ENCODE measurements at regions of chr10 and their contacts with region 1.

Region 1: DNA sequence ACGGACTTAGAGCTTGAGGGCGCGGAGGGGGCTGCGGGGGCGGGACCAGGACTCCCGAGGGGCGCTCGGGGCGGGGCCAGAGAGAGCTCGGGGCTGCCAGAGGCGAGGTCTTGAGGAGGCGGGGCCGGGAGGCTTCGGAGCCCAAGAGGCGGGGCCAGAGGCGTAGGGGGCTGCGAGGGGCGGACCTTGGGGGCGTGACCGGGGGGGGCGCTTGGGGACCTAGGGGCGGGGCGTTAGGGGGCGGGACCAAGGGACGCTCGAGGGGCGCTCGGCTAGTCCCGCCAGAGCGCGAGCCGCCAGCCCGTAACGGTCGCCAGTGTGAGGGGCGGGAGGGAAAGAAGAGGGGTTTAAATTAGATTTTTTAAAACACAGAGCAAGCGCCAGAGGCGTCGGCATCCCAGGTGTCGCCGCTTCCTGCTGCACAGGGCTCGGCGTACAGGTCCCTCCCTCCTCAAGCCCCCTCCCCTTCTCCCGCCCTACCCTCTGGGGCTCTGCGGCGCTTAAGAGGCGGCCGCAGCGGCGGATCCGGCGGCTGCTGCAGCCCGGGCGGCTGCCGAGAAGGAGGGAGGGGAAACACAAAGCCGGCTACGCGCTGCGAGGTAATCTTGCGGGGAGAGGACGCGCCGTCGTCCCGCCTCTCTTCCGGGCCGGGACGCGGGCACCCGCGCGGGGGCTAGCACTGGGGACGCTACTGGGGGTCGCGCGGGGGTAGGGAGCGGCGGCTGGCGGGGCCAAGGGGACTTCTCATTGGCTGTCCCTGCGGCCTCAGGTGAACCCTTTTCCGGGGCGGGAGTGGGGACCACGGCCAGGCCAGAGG is at the start of gene ADD3:
- DNase-seq: peak; percentile 61 to 64 (median 62)
- H3K4me3 ChIP-seq: peak within 1 kb of the TSS; percentile 83 to 93 (median 90)
- H3K4me3 Mint-ChIP-seq: peak within 1 kb of the TSS in 1 of 2 donors; percentile 97
- H3K27ac ChIP-seq: peak within 1 kb of the TSS; percentile 58 to 86
- H3K27ac Mint-ChIP-seq: peak within 1 kb of the TSS; percentile 75 to 91 (median 88)
- H3K4me1 ChIP-seq: peaks cover 33 to 39% of the 10 kb centered on the region in 2 donors
- H3K4me1 Mint-ChIP-seq: peaks cover 52% of the 10 kb centered on the region
- H3K27me3 ChIP-seq: no peaks in the 10 kb centered on the region
- H3K27me3 Mint-ChIP-seq: no peaks in the 10 kb centered on the region
- CTCF ChIP-seq: no peak
- polyA plus RNA-seq, gene ADD3: 94.8 to 126 (median 111) TPM

Region 2: DNA sequence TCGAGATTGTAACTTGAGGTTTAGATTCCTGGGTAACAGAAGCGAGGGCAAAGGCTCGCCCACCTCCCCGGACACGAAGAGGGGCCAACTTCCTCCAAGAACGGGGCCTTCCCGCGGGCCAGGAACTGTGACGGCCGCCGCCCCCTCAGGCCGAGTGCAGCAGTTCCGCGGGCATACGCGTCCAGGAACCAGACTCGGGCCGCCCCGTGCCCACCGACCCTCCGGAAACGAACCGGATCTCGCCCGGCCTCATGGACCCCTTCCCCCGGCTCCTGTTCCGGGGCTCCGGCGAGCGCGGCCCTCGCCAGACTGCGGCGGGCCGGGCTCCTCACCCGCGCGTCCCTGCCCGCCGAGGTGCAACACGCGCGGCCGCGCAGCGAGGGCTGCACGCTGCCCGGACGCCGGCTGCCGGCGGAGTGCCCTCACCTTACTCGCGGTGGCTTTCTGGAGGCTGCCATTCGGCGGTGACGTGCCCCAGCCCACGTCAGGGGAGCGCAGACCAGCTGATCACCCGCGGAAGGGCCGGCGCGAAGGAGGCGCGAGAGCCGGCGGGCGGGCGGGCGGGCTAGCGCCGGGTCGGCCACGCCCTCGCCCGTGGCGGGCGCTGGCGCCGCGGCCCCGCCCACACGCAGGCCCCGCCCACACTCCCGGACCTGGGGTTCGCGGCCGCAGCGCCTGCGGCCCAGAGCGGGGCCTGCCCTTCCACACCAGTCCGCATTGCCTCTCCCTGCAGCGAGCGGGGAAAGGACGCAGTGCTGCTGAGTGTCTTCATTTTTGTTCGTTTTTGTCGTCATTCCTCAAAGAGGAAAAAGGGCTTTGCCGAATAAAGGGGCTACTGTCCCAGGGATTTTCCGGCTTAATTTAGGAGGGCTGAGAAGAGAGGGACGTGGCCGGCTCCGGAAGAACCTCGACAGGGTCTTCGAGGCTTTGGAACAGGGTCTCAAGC is 84.7 kb before region 1 on chr10 and contains the start of gene XPNPEP1:
- intact Hi-C with region 1: loop called in 1 of 2 experiments (anchors 5 kb)
- DNase-seq: peak; percentile 86 to 90 (median 86)
- H3K4me3 ChIP-seq: peak within 1 kb of the TSS; percentile 62 to 87 (median 87)
- H3K4me3 Mint-ChIP-seq: peak within 1 kb of the TSS; percentile 83 to 91
- H3K27ac ChIP-seq: peak within 1 kb of the TSS; percentile 74 to 97
- H3K27ac Mint-ChIP-seq: peak within 1 kb of the TSS; percentile 92 to 97 (median 95)
- H3K4me1 ChIP-seq: peaks cover 21 to 28% of the 10 kb centered on the region in 2 donors
- H3K4me1 Mint-ChIP-seq: peaks cover 43% of the 10 kb centered on the region
- H3K27me3 ChIP-seq: no peaks in the 10 kb centered on the region
- H3K27me3 Mint-ChIP-seq: no peaks in the 10 kb centered on the region
- CTCF ChIP-seq: no peak
- polyA plus RNA-seq, gene XPNPEP1: 32.1 to 62.1 (median 38.4) TPM

Region 3: GRCh38 chr10:109934958-109935706 is 72.8 kb before region 1 on chr10:
- intact Hi-C with region 1: loop called in 1 of 2 experiments (anchors 10 kb)
- DNase-seq: no peak
- H3K4me3 ChIP-seq: no peak overlapping the region
- H3K4me3 Mint-ChIP-seq: no peak overlapping the region
- H3K27ac ChIP-seq: no peak overlapping the region
- H3K27ac Mint-ChIP-seq: peak overlapping the region in 4 of 7 donors; percentile 53 to 78 (median 66)
- H3K4me1 ChIP-seq: peaks cover 38 to 46% of the 10 kb centered on the region in 2 donors
- H3K4me1 Mint-ChIP-seq: peaks cover 49% of the 10 kb centered on the region
- H3K27me3 ChIP-seq: no peaks in the 10 kb centered on the region
- H3K27me3 Mint-ChIP-seq: peaks cover 0 to 2% (median 0%) of the 10 kb centered on the region in 3 donors
- CTCF ChIP-seq: no peak

Region 4: DNA sequence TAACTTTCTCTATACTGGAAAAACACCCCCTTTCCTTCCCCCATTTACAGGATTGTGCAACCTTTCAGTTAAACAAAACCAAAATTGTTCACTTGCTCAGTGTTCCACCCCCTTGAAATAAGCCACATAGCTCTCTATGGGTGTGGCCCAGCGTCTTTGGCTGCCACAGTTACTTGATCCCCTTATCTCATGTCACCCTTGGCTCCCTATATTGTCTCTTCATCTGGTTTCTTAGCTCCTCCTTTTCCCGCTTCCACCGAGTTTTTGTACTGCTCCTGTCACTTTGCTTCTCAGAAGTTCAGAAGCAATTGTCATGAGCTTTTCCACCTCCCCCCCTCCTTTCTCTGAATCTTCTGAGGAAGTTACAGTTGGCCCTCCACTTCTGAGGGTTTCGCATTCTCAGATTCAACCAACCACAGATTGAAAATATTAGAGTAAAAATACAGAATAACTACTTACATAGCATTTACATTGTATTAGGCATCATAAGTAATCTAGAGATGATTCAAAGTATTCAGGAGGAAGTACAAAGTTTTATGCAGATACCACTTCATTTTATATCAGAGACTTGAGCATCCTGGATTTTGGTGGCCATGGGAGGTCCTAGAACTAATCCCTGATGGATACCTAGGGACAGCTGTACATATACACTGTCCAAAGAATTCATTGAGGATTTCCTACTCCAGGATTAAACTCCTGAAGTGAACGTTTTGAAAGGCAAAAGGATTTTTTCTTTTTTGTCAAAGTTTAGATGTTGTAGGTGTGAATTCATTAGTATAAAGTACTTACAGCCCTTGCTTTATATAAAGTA is 60.3 kb after region 1 on chr10:
- intact Hi-C with region 1: loop called in 1 of 2 experiments (anchors 5 kb)
- DNase-seq: peak; percentile 31 to 46 (median 45)
- H3K4me3 ChIP-seq: peak overlapping the region in 2 of 3 experiments; percentile 22 to 47
- H3K4me3 Mint-ChIP-seq: peak overlapping the region; percentile 60 to 92
- H3K27ac ChIP-seq: peak overlapping the region; percentile 74 to 85
- H3K27ac Mint-ChIP-seq: peak overlapping the region; percentile 89 to 97 (median 94)
- H3K4me1 ChIP-seq: peaks cover 43 to 67% of the 10 kb centered on the region in 2 donors
- H3K4me1 Mint-ChIP-seq: peaks cover 59% of the 10 kb centered on the region
- H3K27me3 ChIP-seq: no peaks in the 10 kb centered on the region
- H3K27me3 Mint-ChIP-seq: no peaks in the 10 kb centered on the region
- CTCF ChIP-seq: no peak

Region 5: DNA sequence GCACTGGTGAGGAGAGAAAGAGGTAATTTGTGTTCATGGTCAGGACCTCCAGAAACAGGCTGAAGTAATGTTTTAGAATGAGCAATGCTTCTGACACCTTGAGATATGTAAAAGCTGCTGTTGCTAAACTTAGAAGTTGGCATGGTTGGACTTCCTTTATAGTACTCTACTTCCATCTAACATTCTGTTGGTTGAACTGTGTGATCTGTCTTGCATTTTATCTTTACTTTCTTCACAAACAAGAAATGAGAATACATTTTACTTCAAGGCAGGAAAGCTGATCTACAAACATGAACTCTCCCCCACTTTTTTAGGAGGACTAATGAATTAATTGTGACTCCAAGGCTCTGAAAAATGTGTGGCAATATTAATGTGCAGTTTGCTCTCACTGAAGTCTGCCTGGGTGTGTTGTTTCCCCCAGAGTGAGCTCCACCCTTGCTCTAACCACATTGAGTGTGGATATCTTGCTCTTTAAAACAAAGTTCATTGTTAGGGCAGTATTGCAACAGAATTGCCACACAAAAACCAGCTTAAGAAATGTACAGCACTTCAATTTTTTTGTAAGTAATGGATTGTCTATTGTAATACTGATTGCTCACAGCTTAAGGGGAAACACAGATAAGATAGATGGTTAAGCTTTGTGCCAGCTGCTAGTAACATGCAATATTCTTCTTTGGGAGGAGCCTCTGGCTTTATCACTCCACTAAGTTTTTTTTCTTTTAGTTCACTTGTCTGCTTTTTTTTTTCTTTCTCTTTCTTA is 68.8 kb after region 1 on chr10:
- intact Hi-C with region 1: loop called (anchors 5 kb)
- DNase-seq: peak; percentile 94 to 98 (median 94)
- H3K4me3 ChIP-seq: peak overlapping the region; percentile 19 to 60 (median 42)
- H3K4me3 Mint-ChIP-seq: peak overlapping the region; percentile 65 to 82
- H3K27ac ChIP-seq: peak overlapping the region; percentile 73 to 95
- H3K27ac Mint-ChIP-seq: peak overlapping the region; percentile 99 to 100 (median 99)
- H3K4me1 ChIP-seq: peaks cover 78 to 95% of the 10 kb centered on the region in 2 donors
- H3K4me1 Mint-ChIP-seq: peaks cover 69% of the 10 kb centered on the region
- H3K27me3 ChIP-seq: no peaks in the 10 kb centered on the region
- H3K27me3 Mint-ChIP-seq: no peaks in the 10 kb centered on the region
- CTCF ChIP-seq: no peak

Region 6: DNA sequence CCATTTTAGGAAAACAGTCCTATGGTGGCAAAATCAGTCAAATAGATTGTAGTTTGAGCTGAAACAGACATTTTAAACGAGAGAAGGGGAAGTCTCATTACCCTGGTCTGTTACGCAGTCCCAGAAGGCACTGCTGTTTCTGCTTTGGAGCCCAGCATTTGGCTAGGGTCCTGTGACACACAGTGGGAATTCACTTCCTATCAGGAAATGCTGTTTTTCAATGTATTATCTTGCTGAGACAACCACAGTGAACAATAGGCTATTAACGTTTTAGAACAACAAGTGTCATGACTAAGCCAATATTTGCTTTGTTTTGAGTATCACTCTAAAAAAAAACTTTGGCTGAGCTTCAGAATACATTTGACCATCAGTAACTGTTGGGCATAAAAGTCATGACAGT is 74.0 kb after region 1 on chr10:
- intact Hi-C with region 1: loop called (anchors 5 kb)
- DNase-seq: peak; percentile 83 to 92 (median 85)
- H3K4me3 ChIP-seq: peak overlapping the region in 1 of 3 experiments; percentile 15
- H3K4me3 Mint-ChIP-seq: no peak overlapping the region
- H3K27ac ChIP-seq: peak overlapping the region; percentile 67 to 93
- H3K27ac Mint-ChIP-seq: peak overlapping the region; percentile 89 to 97 (median 93)
- H3K4me1 ChIP-seq: peaks cover 72 to 87% of the 10 kb centered on the region in 2 donors
- H3K4me1 Mint-ChIP-seq: peaks cover 70% of the 10 kb centered on the region
- H3K27me3 ChIP-seq: no peaks in the 10 kb centered on the region
- H3K27me3 Mint-ChIP-seq: no peaks in the 10 kb centered on the region
- CTCF ChIP-seq: no peak